ENCODE measurements at regions of chr2 and their contacts with region 1.

Region 1: DNA sequence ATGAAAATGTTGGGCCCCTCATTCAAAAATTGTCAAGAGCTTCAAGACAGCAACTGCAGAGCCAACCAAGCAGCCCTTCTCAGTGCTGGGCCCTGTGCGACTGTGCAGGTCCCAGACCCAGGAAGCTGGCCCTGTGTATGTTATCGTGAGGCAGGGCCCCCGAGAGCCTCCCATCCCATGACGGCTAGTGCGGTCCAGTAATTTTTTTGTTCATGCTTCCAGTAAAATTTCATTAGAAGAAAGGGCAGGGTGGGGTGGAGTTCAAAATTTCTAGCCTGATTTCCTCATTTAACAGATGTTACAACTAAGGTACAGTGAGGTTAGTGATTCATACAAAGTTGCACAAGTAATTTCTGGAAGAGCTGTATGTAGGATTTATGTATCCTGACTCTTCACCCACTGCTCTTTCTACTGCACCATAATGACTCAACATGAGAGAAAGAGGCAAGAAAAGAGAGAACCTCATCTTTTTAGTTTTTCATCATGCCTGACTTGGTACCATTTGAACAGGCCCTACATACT is 105.5 kb downstream of the ZEB2 start:
- DNase-seq: peak; percentile 40
- H3K4me3 Mint-ChIP-seq: no peak overlapping the region
- H3K27ac Mint-ChIP-seq: peak overlapping the region; percentile 66
- H3K4me1 Mint-ChIP-seq: peaks cover 24% of the 10 kb centered on the region
- H3K27me3 Mint-ChIP-seq: no peaks in the 10 kb centered on the region

Region 2: GRCh38 chr2:143705108-143705686 is 709.2 kb before region 1 on chr2:
- CTCF ChIA-PET with region 1: no interaction called
- POLR2A ChIA-PET with region 1: no interaction called
- intact Hi-C with region 1: loop called (anchors 1 kb)
- DNase-seq: no peak
- H3K4me3 Mint-ChIP-seq: no peak overlapping the region
- H3K27ac Mint-ChIP-seq: peak overlapping the region; percentile 68
- H3K4me1 Mint-ChIP-seq: peaks cover 41% of the 10 kb centered on the region
- H3K27me3 Mint-ChIP-seq: no peaks in the 10 kb centered on the region

Region 3: GRCh38 chr2:144382849-144383248 is 31.5 kb before region 1 on chr2:
- CTCF ChIA-PET with region 1: no interaction called
- POLR2A ChIA-PET with region 1: interaction called, 3 read pairs
- intact Hi-C with region 1: loop called (anchors 1 kb)
- DNase-seq: no peak
- H3K4me3 Mint-ChIP-seq: no peak overlapping the region
- H3K27ac Mint-ChIP-seq: no peak overlapping the region
- H3K4me1 Mint-ChIP-seq: peaks cover 29% of the 10 kb centered on the region
- H3K27me3 Mint-ChIP-seq: peaks cover 6% of the 10 kb centered on the region

Region 4: DNA sequence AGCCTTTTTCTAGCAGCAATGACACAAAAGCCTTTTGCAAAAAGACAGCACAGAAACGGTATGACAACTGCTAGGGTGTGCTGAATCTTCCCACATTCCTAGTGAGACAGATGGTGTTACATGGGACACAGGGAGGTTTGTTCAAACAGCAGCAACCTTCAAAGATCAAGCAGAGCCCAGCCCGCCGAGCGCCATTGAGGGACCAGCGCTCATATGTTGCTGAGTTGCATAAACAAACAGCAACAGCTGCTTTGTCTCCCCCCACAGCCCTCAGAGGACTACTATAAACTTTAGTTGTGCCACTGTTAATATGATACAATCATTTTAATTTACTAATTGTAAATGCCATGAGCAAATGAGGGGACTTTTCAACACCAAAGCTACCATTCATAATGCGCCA is 12.1 kb before region 1 on chr2:
- CTCF ChIA-PET with region 1: no interaction called
- POLR2A ChIA-PET with region 1: no interaction called
- intact Hi-C with region 1: no loop called
- DNase-seq: no peak
- H3K4me3 Mint-ChIP-seq: no peak overlapping the region
- H3K27ac Mint-ChIP-seq: no peak overlapping the region
- H3K4me1 Mint-ChIP-seq: no peaks in the 10 kb centered on the region
- H3K27me3 Mint-ChIP-seq: peaks cover under 1% of the 10 kb centered on the region

Region 5: DNA sequence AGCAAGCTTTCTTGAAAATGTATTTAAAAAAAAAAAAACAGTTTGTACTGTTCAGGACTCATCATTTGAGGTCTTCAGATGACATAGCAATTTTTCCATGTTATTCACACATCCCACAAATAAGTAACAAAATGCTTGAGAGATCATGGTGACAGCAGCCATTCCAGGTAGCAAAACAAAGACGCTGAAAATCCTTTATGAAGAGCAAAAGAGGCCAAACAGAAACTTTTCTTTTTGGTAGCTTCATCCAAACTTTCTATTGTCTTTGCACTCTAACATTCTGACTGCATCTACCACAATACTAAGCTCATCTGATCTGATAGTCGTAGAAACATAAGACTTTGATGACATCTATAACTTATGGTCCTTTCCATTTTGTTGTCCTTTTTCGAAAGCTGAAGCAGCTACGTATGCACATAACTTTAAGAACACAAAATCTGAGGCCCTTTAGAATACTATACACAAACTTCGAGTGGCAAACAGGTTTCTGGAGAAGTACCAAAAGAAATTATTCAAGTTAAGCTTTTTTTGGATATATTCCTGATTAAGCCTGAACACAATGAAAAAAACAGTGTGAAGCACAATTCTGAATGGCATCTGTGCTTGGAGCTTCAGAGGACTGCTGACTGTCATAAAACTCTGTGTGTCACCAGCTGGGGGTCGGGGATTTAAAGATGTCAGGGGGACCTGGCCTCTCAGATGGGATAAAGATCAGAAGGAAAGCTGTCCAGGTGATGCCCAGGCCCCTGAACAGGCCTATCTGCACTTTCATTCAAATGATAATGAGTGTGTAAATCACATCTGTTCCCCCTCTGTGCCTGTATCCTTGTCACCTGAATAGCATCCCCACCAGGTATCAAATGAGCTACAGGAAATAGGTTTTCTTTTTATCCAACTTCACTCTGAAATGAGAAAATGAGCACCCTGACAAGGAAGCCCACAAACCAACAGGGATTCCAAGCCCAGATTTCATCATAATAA is 29.7 kb after region 1 on chr2:
- CTCF ChIA-PET with region 1: no interaction called
- POLR2A ChIA-PET with region 1: no interaction called
- intact Hi-C with region 1: no loop called
- DNase-seq: no peak
- H3K4me3 Mint-ChIP-seq: no peak overlapping the region
- H3K27ac Mint-ChIP-seq: no peak overlapping the region
- H3K4me1 Mint-ChIP-seq: peaks cover under 1% of the 10 kb centered on the region
- H3K27me3 Mint-ChIP-seq: no peaks in the 10 kb centered on the region

Region 6: GRCh38 chr2:144456680-144457079 is 42.3 kb after region 1 on chr2:
- CTCF ChIA-PET with region 1: no interaction called
- POLR2A ChIA-PET with region 1: interaction called, 3 read pairs
- intact Hi-C with region 1: loop called (anchors 1 kb)
- DNase-seq: peak; percentile 31
- H3K4me3 Mint-ChIP-seq: no peak overlapping the region
- H3K27ac Mint-ChIP-seq: no peak overlapping the region
- H3K4me1 Mint-ChIP-seq: peaks cover 52% of the 10 kb centered on the region
- H3K27me3 Mint-ChIP-seq: peaks cover 13% of the 10 kb centered on the region

Region 7: DNA sequence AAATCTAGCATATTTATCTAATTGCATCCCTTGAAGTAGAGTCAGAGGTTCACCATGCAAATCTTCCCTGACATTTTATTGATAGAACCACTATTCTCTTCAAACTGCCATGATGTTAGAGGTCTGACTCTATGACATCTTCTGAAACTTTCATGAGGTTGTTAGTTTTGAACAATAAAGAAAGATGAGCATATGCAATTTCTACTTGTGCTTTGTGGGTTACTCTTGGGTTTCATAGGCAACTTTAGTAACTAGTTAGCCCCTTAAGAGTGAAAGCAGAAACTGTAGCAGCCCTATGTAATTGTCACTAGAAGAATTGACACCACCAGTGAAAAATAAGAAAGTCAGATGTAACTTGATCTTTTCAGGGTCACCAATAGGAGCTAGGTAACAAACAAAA is 158.6 kb after region 1 on chr2:
- CTCF ChIA-PET with region 1: no interaction called
- POLR2A ChIA-PET with region 1: no interaction called
- intact Hi-C with region 1: loop called (anchors 5 kb)
- DNase-seq: no peak
- H3K4me3 Mint-ChIP-seq: no peak overlapping the region
- H3K27ac Mint-ChIP-seq: no peak overlapping the region
- H3K4me1 Mint-ChIP-seq: peaks cover 23% of the 10 kb centered on the region
- H3K27me3 Mint-ChIP-seq: peaks cover 6% of the 10 kb centered on the region

Measured in activated CD4-positive, alpha-beta memory T cell treated with anti-CD3 and anti-CD28 coated beads for 36 hours (primary cell).